ENCODE measurements at regions of chr3 and their contacts with region 1.

Region 1: DNA sequence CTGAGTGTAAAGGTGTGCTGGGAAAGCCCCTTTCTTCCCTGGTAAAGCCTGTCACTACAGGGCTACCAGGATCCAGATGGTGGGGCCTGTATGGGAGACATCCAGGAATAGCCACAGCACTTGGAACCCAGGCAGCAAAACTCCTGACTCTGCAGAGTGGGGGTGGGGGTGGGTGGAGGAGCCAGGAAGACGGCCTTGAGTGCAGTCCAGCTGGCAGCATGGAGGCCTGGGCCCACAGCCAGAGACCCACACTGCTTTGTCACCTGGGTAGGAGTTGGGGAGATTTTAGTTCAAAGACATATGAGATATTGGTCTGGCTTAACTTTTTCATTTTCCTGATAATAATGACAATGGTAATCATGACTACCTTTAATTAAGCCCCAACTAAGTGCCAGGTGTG is 116.7 kb upstream of the MRPS22 start:
- DNase-seq: no peak
- ATAC-seq: no peak
- H3K4me3 ChIP-seq: no peak overlapping the region
- H3K27ac ChIP-seq: no peak overlapping the region; the same call in 1 of the 2 replicates
- H3K4me1 ChIP-seq: 0 out of 2 replicates have a peak, but pooled peaks cover 3% of the 10 kb centered on the region
- H3K27me3 ChIP-seq: no peaks in the 10 kb centered on the region
- CTCF ChIP-seq: no peak

Region 2: GRCh38 chr3:139020868-139021234 is 206.3 kb before region 1 on chr3 and contains the start of gene PRR23B:
- CTCF ChIA-PET with region 1: no interaction called
- POLR2A ChIA-PET with region 1: interaction called, 10 read pairs
- in situ Hi-C with region 1: no loop called
- intact Hi-C with region 1: no loop called
- DNase-seq: no peak
- ATAC-seq: no peak
- H3K4me3 ChIP-seq: no peak within 1 kb of the TSS
- H3K27ac ChIP-seq: no peak within 1 kb of the TSS
- H3K4me1 ChIP-seq: no peaks in the 10 kb centered on the region
- H3K27me3 ChIP-seq: no peaks in the 10 kb centered on the region; the same call in 1 of the 2 replicates
- CTCF ChIP-seq: peak; percentile 44
- total RNA-seq, gene PRR23B: not detected

Region 3: DNA sequence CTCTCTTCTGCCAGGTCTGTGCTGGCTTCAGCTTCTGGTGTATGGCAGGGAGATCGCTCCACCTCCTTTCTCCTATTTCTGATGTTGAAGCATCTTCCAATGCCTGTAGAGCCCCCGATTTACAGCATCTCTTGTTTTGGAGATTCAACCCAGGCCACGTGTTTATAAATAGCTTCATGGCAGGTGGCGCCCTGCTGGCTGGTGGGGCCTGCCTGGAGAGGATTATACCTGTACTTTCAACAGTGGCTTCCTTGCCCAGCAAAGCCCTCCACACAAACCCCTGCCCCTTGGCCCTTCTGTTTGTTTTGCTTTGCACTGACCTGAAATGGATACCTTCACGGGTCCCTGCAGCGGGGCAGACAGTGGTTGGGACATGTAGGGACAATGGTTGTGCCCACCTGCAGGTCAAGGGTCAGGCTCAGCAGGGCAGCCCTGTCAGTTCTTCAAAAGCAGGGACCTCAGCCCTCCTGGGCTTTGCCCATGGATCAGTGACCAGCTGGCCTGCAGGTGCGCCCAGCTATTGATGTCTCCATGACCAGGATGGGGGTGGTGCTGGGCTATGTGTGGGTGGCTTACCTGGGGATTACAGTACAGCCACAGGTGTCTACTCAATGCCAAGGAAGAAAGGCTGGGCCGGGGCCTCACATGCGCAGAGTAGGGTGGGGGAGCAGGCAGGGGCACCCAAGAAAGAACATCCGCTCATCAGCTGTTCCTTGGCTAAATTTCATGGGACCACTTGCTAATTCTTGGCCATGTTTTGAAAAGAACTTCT is 69.8 kb before region 1 on chr3:
- CTCF ChIA-PET with region 1: no interaction called
- POLR2A ChIA-PET with region 1: no interaction called
- in situ Hi-C with region 1: no loop called
- intact Hi-C with region 1: no loop called
- DNase-seq: no peak
- ATAC-seq: no peak
- H3K4me3 ChIP-seq: no peak overlapping the region
- H3K27ac ChIP-seq: no peak overlapping the region
- H3K4me1 ChIP-seq: no peaks in the 10 kb centered on the region
- H3K27me3 ChIP-seq: no peaks in the 10 kb centered on the region; the same call in 1 of the 2 replicates
- CTCF ChIP-seq: no peak

Region 4: DNA sequence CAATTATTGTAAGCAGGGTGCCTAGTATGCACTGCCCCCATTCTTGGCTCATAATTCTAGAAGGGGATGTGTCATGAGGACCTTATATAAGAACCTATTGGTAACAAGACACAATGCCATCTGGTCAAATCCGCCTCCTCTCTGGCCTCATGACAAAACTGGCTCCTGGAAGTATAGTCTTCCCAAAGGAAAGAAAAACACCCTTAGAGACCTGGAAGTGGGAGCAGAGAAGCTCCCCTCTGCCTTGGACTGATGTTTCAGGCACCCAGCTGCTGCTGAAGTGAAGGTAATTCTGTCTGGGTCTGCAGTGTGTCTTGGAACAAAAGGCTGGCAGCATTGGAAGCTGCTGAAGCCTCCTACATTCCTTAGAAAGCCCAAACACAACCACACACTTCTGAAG is 600.7 kb after region 1 on chr3:
- CTCF ChIA-PET with region 1: no interaction called
- POLR2A ChIA-PET with region 1: no interaction called
- in situ Hi-C with region 1: no loop called
- intact Hi-C with region 1: no loop called
- DNase-seq: no peak
- ATAC-seq: no peak
- H3K4me3 ChIP-seq: no peak overlapping the region
- H3K27ac ChIP-seq: no peak overlapping the region
- H3K4me1 ChIP-seq: no peaks in the 10 kb centered on the region
- H3K27me3 ChIP-seq: no peaks in the 10 kb centered on the region
- CTCF ChIP-seq: no peak